ENCODE measurements at regions of chr20 and their contacts with region 1.

Region 1: GRCh38 chr20:44747166-44748004 is 1.7 kb downstream of the KCNK15 start:
- DNase-seq: peak; percentile 57 to 83
- ATAC-seq: peak; percentile 81

Region 2: DNA sequence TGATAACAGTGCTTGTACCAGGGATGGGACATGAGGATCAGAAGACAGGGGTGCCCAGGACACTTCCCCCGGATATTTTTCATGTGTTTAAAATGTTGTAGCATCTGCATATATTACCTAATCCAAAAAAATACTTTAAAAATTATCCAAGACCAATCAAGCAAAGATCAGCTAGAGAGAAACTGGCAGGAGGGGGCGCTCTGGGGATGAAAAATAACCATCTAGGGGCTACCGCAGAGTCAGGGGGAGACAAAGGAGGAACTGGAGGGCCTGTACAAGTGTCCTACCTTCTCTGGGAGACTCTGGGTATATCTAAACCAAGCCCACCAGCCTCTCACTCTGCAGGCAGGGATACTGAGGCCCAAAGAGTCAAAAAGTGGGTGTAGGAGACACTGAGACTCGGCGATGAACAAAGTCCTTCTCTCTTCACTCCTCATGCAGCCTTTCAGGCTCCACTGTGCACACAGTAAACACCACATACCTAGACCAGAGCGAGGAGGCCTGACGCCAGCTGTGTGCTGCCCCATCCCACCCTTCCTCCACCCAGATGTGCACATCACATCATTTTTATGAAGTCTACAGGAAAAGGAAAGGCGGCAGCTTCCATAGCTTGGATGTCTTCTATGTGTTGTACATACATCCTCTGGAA is 53.1 kb after region 1 on chr20:
- intact Hi-C with region 1: no loop called
- DNase-seq: peak in 1 of 2 donors; percentile 27
- ATAC-seq: no peak

Region 3: DNA sequence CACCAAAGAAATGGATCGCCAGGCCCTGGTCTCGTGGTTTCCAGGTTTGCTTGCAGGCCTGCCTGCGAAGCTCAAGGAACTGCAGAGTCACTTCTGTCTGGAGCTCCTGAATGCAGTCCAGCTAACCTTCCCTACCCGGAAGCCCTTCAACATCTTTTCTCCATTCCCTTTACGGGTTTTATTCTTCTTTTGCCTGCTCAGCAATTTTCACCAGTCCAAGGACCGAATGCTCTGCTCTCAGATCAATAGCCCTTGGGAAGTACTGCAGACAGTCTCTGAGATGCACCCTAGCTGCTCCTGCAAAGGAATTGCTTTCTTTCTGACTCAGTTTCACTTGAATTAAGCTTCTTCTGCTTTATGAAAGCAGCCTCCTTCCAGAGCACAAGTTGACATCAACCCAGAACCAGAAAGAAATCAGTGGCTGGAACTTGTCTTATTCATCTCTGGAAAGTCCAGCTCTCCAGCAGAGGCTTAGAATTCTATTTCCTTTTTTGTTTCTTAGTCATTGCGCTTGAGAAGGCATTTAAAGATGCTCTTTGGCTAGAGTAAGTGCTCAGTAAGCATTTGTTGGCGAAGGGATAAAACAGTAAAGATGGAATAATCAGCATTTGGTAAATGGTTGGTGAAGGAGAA is 119.4 kb after region 1 on chr20:
- intact Hi-C with region 1: loop called in 1 of 2 experiments (anchors 5 kb)
- DNase-seq: no peak
- ATAC-seq: no peak